WTC11 (cell line): ENCODE measurements at regions of chr19 and their contacts with region 1.

Region 1: DNA sequence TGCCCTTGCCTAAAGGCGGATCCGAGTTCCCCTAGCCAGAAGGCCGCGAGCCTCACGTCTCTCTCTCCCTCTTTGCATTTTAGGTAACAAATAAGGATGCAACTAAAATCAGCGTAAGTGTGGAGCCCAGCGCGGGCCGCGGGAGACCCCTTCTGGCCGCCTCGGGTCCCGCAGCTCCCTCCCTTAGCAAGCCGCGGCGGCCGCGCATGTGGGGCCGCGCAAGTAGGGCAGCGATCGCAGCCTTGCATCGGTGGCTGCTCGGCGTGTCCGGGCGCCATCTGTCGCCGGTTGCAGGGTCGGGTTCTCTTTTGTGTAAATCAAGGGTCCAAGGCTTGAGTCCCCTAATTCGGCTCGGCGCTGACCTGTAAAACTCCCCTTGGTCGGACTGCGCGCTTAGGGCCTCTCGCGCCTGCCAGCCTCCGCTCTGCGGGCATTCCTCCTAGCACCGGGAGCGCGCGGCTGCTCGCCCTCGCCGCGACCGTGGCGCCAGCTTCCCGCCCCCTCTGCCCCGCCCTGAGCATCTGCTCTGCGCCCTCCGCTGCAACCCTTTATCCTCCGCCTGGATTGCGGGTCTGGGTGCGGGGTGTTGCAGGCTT is 2.7 kb downstream of the VSTM2B start:
- DNase-seq: peak; percentile 86
- ATAC-seq: peak; percentile 49
- H3K4me3 Mint-ChIP-seq: peak overlapping the region; percentile 69
- H3K27ac Mint-ChIP-seq: no peak overlapping the region
- H3K4me1 Mint-ChIP-seq: peaks cover 24% of the 10 kb centered on the region
- H3K27me3 Mint-ChIP-seq: peaks cover 79% of the 10 kb centered on the region
- CTCF ChIP-seq: peak; percentile 73

Region 2: GRCh38 chr19:29268721-29269393 is 259.6 kb before region 1 on chr19:
- CTCF ChIA-PET with region 1: interaction called, 27 read pairs
- POLR2A ChIA-PET with region 1: no interaction called
- DNase-seq: peak; percentile 26
- ATAC-seq: peak; percentile 76
- H3K4me3 Mint-ChIP-seq: no peak overlapping the region
- H3K27ac Mint-ChIP-seq: no peak overlapping the region
- H3K4me1 Mint-ChIP-seq: peaks cover 30% of the 10 kb centered on the region
- H3K27me3 Mint-ChIP-seq: peaks cover 5% of the 10 kb centered on the region
- CTCF ChIP-seq: no peak

Region 3: GRCh38 chr19:29415507-29415906 is 112.9 kb before region 1 on chr19:
- CTCF ChIA-PET with region 1: interaction called, 10 read pairs
- POLR2A ChIA-PET with region 1: no interaction called
- DNase-seq: peak; percentile 54
- ATAC-seq: peak; percentile 68
- H3K4me3 Mint-ChIP-seq: no peak overlapping the region
- H3K27ac Mint-ChIP-seq: no peak overlapping the region
- H3K4me1 Mint-ChIP-seq: no peaks in the 10 kb centered on the region
- H3K27me3 Mint-ChIP-seq: no peaks in the 10 kb centered on the region
- CTCF ChIP-seq: no peak

Region 4: GRCh38 chr19:29478578-29479565 is 49.6 kb before region 1 on chr19:
- CTCF ChIA-PET with region 1: interaction called, 21 read pairs
- POLR2A ChIA-PET with region 1: interaction called, 3 read pairs
- DNase-seq: peak; percentile 90
- ATAC-seq: peak; percentile 100
- H3K4me3 Mint-ChIP-seq: no peak overlapping the region
- H3K27ac Mint-ChIP-seq: no peak overlapping the region
- H3K4me1 Mint-ChIP-seq: no peaks in the 10 kb centered on the region
- H3K27me3 Mint-ChIP-seq: peaks cover 12% of the 10 kb centered on the region
- CTCF ChIP-seq: peak; percentile 39; the same call in 1 of the 2 replicates

Region 5: GRCh38 chr19:29510701-29511265 is 17.7 kb before region 1 on chr19:
- CTCF ChIA-PET with region 1: interaction called, 17 read pairs
- POLR2A ChIA-PET with region 1: no interaction called
- DNase-seq: peak; percentile 54
- ATAC-seq: peak; percentile 83
- H3K4me3 Mint-ChIP-seq: no peak overlapping the region
- H3K27ac Mint-ChIP-seq: no peak overlapping the region
- H3K4me1 Mint-ChIP-seq: peaks cover 9% of the 10 kb centered on the region
- H3K27me3 Mint-ChIP-seq: peaks cover 11% of the 10 kb centered on the region
- CTCF ChIP-seq: no peak

Region 6: DNA sequence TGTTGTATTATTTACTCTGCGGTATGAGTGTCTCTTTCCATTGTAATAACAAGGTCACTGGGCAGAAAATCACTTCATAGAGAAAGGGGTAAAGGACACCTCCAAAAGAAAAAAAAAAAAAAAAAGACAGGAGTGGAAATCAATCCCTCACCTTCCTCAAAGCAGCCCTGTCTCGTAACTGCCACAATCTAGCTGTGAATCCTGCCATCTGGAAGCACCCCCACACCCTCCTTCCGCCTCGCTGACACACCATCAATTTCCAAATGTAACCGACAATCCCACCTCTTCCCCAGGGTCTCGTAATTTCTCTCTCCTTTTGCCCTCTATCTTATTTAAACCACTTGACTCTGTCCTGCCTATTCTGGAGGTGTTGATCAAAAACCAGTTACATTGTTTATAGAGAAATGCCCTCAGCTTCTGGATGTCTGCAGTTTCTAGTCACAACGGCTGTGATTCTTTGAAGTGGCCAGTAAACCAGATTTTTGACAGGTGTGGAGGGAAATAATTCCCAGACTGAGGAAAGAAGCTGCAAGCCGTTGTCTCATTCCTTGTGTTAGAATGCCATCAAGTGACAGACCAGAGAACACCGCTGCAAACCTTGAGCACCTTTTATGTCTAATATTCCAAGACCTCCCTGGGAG is 68.6 kb after region 1 on chr19:
- CTCF ChIA-PET with region 1: interaction called, 13 read pairs
- POLR2A ChIA-PET with region 1: no interaction called
- DNase-seq: no peak
- ATAC-seq: no peak; the same call in 1 of the 2 replicates
- H3K4me3 Mint-ChIP-seq: no peak overlapping the region; the same call in 1 of the 2 replicates
- H3K27ac Mint-ChIP-seq: no peak overlapping the region
- H3K4me1 Mint-ChIP-seq: peaks cover 21% of the 10 kb centered on the region
- H3K27me3 Mint-ChIP-seq: peaks cover 35% of the 10 kb centered on the region
- CTCF ChIP-seq: no peak